MCF 10A (cell line): ENCODE measurements at regions of chr1 and their contacts with region 1.

Region 1: DNA sequence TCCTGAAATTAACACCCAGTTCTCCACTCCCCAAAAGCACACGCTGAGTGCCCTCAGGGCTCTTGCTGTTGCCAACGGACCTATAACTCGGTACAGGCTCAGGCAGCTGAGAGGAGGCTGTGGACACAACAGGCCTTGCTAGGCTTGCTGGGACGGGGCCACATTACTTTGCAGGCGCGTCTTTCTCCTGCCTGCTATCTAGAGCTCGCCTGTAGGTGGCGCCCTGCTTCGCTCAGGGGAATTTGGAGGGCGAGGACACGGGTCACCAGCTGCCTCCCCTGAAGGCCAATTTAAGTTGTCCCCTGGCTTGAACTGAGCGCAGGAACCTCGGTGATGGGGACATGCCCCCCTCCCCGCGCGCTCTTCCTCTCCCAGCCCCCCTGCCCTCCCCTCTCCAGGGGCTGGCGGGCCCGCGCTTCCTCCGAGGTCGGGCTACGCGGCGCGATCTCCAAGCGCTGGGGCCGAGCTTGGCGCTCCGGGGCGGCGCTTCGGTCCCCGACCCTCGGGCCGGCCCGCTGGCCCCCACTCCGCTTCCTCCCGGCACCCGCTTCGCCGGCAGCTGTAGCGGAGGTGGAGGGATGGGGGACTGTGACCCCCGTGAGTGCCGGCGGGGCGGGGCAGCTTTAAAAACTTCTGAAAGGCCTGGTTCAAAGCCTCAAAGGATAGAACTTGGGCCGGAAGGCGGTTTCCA is 32.4 kb upstream of the NFIA start:
- DNase-seq: peak; percentile 90
- H3K4me3 Mint-ChIP-seq: peak overlapping the region; percentile 76
- H3K27ac Mint-ChIP-seq: peak overlapping the region; percentile 19
- H3K4me1 Mint-ChIP-seq: peaks cover 20% of the 10 kb centered on the region
- H3K27me3 Mint-ChIP-seq: no peaks in the 10 kb centered on the region
- CTCF ChIP-seq: peak; percentile 93

Region 2: DNA sequence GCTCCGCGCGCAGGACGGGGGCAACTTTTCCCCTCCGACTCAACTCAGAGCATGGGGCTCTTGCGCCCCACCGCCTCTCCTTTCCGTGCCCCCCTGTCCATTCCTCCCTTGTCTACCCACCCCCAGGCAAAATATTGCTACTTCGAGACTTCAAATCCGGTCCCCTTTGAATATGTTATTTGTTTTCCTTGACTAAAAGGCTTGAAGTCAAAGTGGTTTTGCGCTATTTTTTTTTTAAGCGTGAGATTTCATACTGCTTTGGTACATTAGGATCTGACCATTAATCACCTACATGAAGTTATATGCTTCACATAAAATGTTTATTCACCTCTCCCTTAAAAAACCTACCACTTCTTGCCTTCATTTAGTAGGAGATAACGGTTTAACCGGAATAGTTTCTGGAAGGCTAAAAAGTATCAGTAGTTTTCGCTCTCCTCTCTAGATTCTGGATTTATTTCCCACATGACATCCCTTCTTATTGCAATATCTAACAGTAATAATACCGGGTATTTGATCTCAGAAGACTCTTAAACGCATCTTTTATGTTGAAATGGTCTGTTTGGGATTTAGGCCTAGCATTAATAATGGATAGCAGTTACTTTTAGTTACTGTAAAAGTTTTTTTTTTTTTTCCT is 33.9 kb after region 1 on chr1:
- CTCF ChIA-PET with region 1: interaction called, 77 read pairs
- POLR2A ChIA-PET with region 1: interaction called, 369 read pairs
- intact Hi-C with region 1: no loop called
- DNase-seq: peak; percentile 36
- H3K4me3 Mint-ChIP-seq: peak overlapping the region; percentile 88
- H3K27ac Mint-ChIP-seq: peak overlapping the region; percentile 96
- H3K4me1 Mint-ChIP-seq: peaks cover 29% of the 10 kb centered on the region
- H3K27me3 Mint-ChIP-seq: no peaks in the 10 kb centered on the region
- CTCF ChIP-seq: no peak

Region 3: DNA sequence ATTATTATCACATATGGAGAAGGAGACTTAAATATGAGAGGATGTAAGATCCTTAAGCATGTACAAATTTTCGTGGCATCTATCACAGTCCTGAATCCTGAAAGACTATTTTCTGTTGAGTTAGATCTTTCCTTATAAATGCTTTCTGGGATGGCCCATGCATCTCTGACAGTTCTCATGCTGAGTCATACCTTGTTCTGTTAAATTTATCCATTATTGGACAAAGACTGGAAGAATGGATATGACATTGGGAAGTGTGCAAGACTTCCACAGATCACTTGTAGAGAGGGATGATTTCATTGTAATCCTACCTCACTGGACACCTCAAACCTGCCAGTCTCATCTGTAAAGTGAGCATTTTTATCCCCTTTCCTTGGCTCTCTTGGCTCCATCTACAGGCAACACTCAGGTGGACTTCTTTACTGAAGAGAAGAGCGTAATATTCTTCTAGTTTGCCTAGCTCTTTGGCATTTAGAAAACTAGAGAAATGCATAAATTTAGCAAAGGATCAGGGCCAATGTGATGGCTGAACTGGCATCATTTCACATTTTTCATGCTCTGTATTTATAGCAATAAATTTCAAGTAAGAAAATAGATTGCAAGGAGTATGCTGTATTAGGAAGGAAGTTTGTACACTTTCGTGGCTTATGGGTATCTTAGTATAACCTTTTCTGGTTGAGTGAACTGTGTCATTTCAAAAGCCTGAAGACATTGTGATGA is 160.6 kb after region 1 on chr1:
- CTCF ChIA-PET with region 1: interaction called, 6 read pairs
- POLR2A ChIA-PET with region 1: no interaction called
- intact Hi-C with region 1: loop called (anchors 1 kb)
- DNase-seq: no peak
- H3K4me3 Mint-ChIP-seq: no peak overlapping the region
- H3K27ac Mint-ChIP-seq: no peak overlapping the region
- H3K4me1 Mint-ChIP-seq: no peaks in the 10 kb centered on the region
- H3K27me3 Mint-ChIP-seq: no peaks in the 10 kb centered on the region
- CTCF ChIP-seq: peak; percentile 13

Region 4: GRCh38 chr1:61226784-61227567 is 177.0 kb after region 1 on chr1:
- CTCF ChIA-PET with region 1: interaction called, 4 read pairs
- POLR2A ChIA-PET with region 1: interaction called, 12 read pairs
- intact Hi-C with region 1: no loop called
- DNase-seq: peak; percentile 95
- H3K4me3 Mint-ChIP-seq: peak overlapping the region; percentile 56
- H3K27ac Mint-ChIP-seq: peak overlapping the region; percentile 49
- H3K4me1 Mint-ChIP-seq: peaks cover 29% of the 10 kb centered on the region
- H3K27me3 Mint-ChIP-seq: no peaks in the 10 kb centered on the region
- CTCF ChIP-seq: no peak

Region 5: GRCh38 chr1:61287734-61288133 is 237.7 kb after region 1 on chr1:
- CTCF ChIA-PET with region 1: interaction called, 7 read pairs
- POLR2A ChIA-PET with region 1: interaction called, 11 read pairs
- intact Hi-C with region 1: no loop called
- DNase-seq: peak; percentile 57
- H3K4me3 Mint-ChIP-seq: no peak overlapping the region
- H3K27ac Mint-ChIP-seq: peak overlapping the region; percentile 53
- H3K4me1 Mint-ChIP-seq: peaks cover 43% of the 10 kb centered on the region
- H3K27me3 Mint-ChIP-seq: no peaks in the 10 kb centered on the region
- CTCF ChIP-seq: no peak